GM18951 (cell line): ENCODE measurements at regions of chr22 and their contacts with region 1.

Region 1: GRCh38 chr22:42437488-42438292 is 5.5 kb upstream of the NFAM1 start:
- POLR2A ChIP-seq: peak; percentile 50

Region 2: DNA sequence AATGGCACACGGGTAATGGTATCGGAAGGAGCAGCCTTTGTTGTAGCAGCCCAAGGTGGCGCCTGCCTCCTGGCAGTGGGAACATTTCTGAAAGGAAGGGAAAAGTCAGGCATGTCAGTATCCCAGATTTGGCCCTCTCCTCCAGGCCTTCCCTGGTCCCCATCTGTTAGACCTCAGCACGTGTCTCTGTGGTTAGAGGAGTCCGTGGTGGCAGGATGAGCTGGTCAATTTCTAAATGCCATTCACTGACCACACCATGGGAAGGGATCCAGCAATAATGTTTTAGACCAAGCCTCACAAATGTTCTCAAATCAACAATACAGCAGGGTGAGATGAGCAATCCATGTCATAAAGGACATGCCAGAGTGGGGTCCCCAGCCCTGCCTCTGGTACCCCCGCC is 258.1 kb before region 1 on chr22:
- in situ Hi-C with region 1: loop called (anchors 10 kb)
- POLR2A ChIP-seq: no peak